ENCODE measurements at regions of chr1 and their contacts with region 1.

Region 1: DNA sequence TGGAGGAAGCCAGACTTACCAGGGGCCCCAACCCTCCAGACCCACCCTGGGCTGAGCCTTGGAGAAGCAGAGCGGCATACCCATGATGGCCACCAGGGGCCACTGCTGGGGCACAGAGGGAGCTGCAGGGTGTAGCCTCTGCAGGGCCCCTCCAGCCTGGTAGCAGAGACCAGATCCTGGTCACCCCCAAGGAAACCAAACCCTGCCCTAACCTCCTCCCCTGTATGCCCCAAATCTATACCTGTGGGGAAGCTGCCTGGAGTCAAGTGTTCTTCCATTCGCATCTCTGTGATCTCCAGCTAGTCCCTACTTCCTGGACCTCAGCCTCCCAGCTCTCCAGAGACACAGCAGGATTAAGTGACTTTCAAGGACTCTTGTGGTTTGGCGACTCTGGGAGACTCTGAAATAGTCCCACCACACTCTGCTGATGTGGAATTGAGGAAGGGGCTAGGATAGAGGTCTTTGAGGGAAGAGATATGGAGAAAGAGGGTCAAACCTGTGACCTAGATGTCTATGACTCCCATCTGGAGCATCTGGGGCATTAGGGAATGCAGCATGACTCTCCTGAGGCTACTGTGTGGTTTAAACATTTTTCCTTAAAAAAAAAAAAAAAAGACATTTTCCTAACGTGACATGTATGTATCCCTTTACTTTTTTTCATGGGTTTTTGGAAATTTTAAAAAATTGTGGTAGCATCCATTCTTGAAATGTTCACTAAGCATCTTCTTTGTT is 119.2 kb upstream of the IPO9 start:
- DNase-seq: peak; percentile 24
- ATAC-seq: peak; percentile 99
- H3K4me3 ChIP-seq: no peak overlapping the region
- H3K27ac ChIP-seq: no peak overlapping the region
- H3K4me1 ChIP-seq: no peaks in the 10 kb centered on the region
- H3K27me3 ChIP-seq: no peaks in the 10 kb centered on the region; a peak in 1 of 5 replicates
- CTCF ChIP-seq: peak; percentile 90
- EP300 ChIP-seq: no peak
- POLR2A ChIP-seq: no peak
- RAD21 ChIP-seq: peak; percentile 68; the same call in 1 of the 2 replicates

Region 2: DNA sequence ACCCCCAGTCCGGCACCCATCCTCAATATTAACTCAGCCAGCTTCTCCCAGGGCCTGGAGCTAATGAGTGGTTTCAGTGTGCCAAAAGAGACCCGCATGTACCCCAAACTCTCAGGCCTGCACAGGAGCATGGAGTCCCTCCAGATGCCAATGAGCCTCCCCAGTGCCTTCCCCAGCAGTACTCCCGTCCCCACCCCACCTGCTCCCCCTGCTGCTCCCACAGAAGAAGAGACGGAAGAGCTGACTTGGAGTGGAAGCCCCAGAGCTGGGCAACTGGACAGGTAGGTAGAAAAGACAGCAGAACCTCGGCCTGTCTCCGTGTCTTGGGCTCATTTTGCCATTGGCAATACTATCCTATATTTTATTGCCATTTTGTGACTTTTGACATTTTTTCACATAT is 73.8 kb after region 1 on chr1:
- CTCF ChIA-PET with region 1: no interaction called
- POLR2A ChIA-PET with region 1: no interaction called
- in situ Hi-C with region 1: loop called (anchors 5 kb)
- intact Hi-C with region 1: no loop called
- DNase-seq: no peak
- ATAC-seq: no peak
- H3K4me3 ChIP-seq: no peak overlapping the region
- H3K27ac ChIP-seq: no peak overlapping the region
- H3K4me1 ChIP-seq: no peaks in the 10 kb centered on the region
- H3K27me3 ChIP-seq: peaks cover 0 to 48% of the 10 kb centered on the region in 2 experiments; a peak in 3 of 5 replicates
- CTCF ChIP-seq: no peak
- EP300 ChIP-seq: no peak
- POLR2A ChIP-seq: no peak
- RAD21 ChIP-seq: no peak

Region 3: DNA sequence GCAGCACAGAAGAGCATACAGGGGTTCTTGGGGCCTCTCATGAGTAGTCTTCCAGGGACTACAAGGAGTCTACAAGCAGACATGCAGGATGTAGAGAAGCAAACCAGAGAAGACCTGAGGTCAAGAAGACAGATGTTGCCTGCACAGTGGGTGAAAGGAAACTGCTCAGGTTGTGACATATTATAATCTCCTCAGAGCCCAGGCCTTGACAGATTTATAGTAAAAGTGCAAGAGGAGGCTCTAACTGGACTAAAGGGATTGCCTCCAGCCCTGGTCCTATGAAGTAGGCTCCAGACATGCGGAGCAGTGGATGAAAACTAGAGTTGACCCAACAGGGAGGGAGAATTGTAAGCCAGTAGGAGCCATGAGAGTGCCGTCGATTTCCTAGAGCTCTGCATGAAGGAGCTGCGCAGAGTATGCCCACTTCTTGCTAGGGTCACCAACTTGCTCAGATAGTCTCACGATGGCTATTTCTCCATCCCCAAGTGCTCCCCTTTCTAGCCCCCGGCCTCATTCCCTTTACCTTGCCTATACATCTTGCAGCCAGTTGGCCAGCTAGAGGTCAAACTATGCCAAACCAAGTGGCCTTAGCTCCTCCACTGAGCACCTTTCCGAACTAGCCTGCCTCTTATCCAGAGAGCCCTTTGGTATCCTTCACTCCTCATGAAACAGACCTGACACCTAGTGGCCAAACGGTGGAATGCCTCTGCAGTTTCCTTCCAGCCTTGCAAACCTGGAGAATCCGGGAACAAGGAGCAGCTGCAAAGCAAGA is 83.0 kb after region 1 on chr1:
- CTCF ChIA-PET with region 1: interaction called, 27 read pairs
- POLR2A ChIA-PET with region 1: no interaction called
- in situ Hi-C with region 1: loop called (anchors 5 kb)
- intact Hi-C with region 1: loop called (anchors 1 kb)
- DNase-seq: peak; percentile 56
- ATAC-seq: peak; percentile 95
- H3K4me3 ChIP-seq: no peak overlapping the region
- H3K27ac ChIP-seq: no peak overlapping the region
- H3K4me1 ChIP-seq: no peaks in the 10 kb centered on the region
- H3K27me3 ChIP-seq: peaks cover 2 to 28% of the 10 kb centered on the region in 2 experiments; a peak in 4 of 5 replicates
- CTCF ChIP-seq: peak; percentile 95
- EP300 ChIP-seq: no peak
- POLR2A ChIP-seq: no peak
- RAD21 ChIP-seq: peak; percentile 55; the same call in 1 of the 2 replicates

Region 4: DNA sequence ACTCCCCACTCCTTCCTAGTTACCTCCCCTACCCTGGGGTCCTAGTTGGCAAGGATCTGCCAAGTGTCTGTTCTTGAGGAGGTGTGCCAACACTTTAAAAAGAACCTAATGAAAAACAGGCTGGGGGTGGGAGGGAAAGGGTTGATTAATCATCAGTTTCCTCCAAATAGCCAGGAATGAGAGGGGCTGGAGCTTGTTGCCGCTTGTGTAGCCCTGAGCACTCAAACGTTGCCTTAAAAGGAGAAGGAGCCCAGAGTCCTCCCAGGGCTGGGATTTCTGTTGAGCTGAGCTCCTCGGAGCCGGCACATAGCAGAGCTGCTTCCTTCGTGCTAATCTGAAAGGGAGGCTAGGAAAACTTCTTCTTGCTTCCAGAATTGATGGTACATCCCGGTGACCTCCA is 194.8 kb after region 1 on chr1:
- CTCF ChIA-PET with region 1: no interaction called
- POLR2A ChIA-PET with region 1: no interaction called
- in situ Hi-C with region 1: no loop called
- intact Hi-C with region 1: no loop called
- DNase-seq: no peak
- ATAC-seq: no peak
- H3K4me3 ChIP-seq: no peak overlapping the region
- H3K27ac ChIP-seq: no peak overlapping the region
- H3K4me1 ChIP-seq: no peaks in the 10 kb centered on the region
- H3K27me3 ChIP-seq: peaks cover 2 to 23% of the 10 kb centered on the region in 2 experiments; a peak in 2 of 5 replicates
- CTCF ChIP-seq: no peak
- EP300 ChIP-seq: no peak
- POLR2A ChIP-seq: no peak
- RAD21 ChIP-seq: no peak

Measured in HepG2 (cell line).